ENCODE measurements at regions of chr10 and their contacts with region 1.

Region 1: DNA sequence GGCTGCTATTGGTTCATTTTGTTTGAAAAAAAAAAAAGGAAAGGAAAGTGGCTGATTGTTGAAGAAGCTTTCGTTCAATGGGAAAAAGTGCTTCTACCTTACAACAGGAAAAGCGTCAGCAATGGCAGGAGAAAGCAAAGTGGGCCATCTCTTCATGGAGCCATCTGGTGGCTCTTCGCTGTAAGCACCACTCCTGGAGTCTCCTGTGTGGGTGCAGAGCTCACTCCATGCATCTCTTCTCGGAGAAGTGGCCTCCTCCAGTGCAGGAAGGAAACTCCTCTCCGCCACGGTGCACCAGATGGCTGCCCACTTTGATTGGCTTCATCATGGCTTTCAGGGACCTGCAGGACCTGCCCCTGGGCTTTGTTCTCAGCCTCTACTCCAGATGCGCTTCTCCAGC is 250.9 kb downstream of the PTEN start:
- DNase-seq: no peak
- H3K4me3 ChIP-seq: no peak overlapping the region
- H3K27ac ChIP-seq: no peak overlapping the region
- H3K4me1 ChIP-seq: no peaks in the 10 kb centered on the region
- H3K27me3 ChIP-seq: no peaks in the 10 kb centered on the region
- CTCF ChIP-seq: peak in 3 of 4 experiments; percentile 24 to 26 (median 25)
- POLR2A ChIP-seq: no peak

Region 2: DNA sequence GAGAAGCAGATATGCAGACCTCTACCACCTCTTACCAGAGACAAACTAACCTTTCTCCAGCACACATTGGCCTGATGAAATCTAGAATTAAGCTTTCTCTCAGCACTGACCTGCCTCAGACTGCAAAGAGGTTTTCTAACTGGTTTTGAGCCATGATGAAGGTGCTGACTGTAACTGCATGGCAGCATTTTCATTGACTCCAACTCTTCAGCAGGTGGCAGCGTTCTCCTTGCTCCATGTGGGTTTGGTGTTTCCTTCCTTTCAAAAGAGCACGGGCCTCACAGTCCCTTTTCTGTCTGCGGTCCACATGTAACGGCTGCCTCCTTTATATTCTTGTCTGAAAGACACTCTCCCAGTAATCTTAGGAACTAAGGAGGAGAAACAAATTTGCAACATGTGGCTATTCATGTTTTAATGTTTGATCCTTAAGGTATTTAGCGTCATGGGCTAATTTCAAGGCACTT is 263.6 kb before region 1 on chr10:
- intact Hi-C with region 1: loop called (anchors 10 kb)
- DNase-seq: peak; percentile 65
- H3K4me3 ChIP-seq: no peak overlapping the region
- H3K27ac ChIP-seq: no peak overlapping the region
- H3K4me1 ChIP-seq: no peaks in the 10 kb centered on the region
- H3K27me3 ChIP-seq: no peaks in the 10 kb centered on the region
- CTCF ChIP-seq: peak; percentile 13 to 75 (median 66)
- POLR2A ChIP-seq: no peak

Region 3: DNA sequence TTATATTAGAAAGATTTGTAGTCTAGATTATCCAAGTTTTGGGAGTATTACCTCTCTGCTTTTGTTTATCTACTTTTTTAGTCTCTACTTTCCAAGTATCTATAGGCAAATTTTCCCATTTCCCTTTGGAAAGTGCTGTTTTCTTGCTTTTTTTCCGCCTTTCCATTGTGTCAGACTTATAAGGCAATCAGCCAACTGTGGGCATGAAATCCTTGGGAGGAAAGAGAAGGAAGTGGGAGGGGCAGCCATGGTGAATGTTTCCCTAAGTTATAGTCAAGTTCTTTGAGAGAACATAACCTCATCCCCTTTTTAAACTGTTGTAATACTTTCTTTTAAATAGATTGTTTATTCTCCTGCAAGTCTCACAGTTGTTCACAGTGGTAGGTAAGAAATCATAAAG is 198.4 kb before region 1 on chr10:
- intact Hi-C with region 1: no loop called
- DNase-seq: no peak
- H3K4me3 ChIP-seq: no peak overlapping the region
- H3K27ac ChIP-seq: no peak overlapping the region
- H3K4me1 ChIP-seq: no peaks in the 10 kb centered on the region
- H3K27me3 ChIP-seq: no peaks in the 10 kb centered on the region
- CTCF ChIP-seq: no peak
- POLR2A ChIP-seq: no peak

Region 4: DNA sequence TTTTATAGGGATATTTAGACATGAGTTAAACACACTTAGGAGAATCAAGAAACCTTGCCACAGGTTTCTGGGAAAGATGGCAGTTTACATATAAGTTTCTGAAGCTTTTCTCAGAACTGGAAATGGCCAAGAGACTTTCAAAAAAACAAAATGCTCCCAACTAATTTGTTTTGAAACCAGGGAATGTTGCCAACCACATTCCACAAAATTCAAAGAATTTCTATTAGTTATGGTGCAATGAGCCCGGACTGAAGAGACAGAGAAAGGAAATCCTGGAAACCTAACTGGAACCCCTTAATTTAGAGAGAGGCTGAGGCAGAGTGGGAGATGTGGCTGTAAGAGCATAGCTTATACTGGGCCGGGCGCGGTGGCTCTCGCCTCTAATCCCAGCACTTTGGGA is 122.4 kb before region 1 on chr10:
- intact Hi-C with region 1: no loop called
- DNase-seq: no peak
- H3K4me3 ChIP-seq: no peak overlapping the region
- H3K27ac ChIP-seq: no peak overlapping the region
- H3K4me1 ChIP-seq: no peaks in the 10 kb centered on the region
- H3K27me3 ChIP-seq: no peaks in the 10 kb centered on the region
- CTCF ChIP-seq: no peak
- POLR2A ChIP-seq: no peak